Activated CD4-positive, alpha-beta T cell treated with anti-CD3 and anti-CD28 coated beads for 36 hours (primary cell): ENCODE measurements at regions of chr2 and their contacts with region 1.

Region 1: DNA sequence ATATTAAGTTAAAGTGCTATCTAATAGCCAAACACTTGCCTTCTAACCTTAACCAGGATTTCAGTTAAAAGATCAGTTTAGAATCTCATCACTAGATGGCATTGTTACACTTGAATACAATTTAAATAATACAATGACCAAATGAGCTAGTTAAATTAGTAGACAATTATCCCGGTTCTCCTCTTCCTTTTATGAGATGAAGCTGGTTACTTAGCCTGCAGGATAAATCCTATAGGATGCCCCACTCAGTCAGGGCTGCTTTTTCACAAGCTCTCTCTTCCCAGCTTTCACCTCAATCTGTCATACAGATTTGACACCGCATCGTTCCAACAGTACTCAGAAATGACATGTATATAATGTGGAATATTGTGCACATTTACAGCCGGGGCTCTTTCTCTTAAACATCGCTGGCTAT is 678.8 kb downstream of the KCNJ3 start:
- DNase-seq: no peak
- ATAC-seq: no peak
- H3K4me3 Mint-ChIP-seq: no peak overlapping the region
- H3K27ac Mint-ChIP-seq: no peak overlapping the region
- H3K4me1 Mint-ChIP-seq: peaks cover 13% of the 10 kb centered on the region
- H3K27me3 Mint-ChIP-seq: peaks cover 2% of the 10 kb centered on the region

Region 2: DNA sequence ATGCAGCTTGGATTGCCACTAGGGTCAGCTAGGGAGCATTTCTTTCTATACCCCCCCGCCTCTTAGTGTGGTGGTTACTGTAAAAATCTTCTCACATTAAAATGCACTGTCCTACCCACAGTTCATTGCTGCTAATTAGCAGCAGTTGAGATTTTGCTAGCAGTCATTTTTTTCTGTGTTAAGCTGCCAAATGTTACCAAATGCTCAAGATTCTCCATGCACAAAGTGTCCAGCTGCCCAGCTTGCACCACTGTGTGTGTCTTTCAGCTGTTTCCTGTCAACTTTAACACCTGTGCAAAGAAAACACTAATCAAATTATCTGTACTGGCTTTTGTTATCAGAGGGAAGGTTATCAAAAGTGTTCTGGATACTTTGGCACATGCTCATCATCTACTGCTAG is 275.9 kb after region 1 on chr2:
- CTCF ChIA-PET with region 1: no interaction called
- POLR2A ChIA-PET with region 1: no interaction called
- intact Hi-C with region 1: loop called in 1 of 2 experiments (anchors 10 kb)
- DNase-seq: no peak
- ATAC-seq: no peak
- H3K4me3 Mint-ChIP-seq: no peak overlapping the region
- H3K27ac Mint-ChIP-seq: no peak overlapping the region
- H3K4me1 Mint-ChIP-seq: no peaks in the 10 kb centered on the region
- H3K27me3 Mint-ChIP-seq: no peaks in the 10 kb centered on the region

Region 3: GRCh38 chr2:156400706-156401678 is 1023.7 kb after region 1 on chr2:
- CTCF ChIA-PET with region 1: no interaction called
- POLR2A ChIA-PET with region 1: no interaction called
- intact Hi-C with region 1: loop called in 1 of 2 experiments (anchors 10 kb)
- DNase-seq: peak; percentile 85
- ATAC-seq: peak; percentile 64
- H3K4me3 Mint-ChIP-seq: peak overlapping the region; percentile 85
- H3K27ac Mint-ChIP-seq: peak overlapping the region; percentile 95
- H3K4me1 Mint-ChIP-seq: peaks cover 43% of the 10 kb centered on the region
- H3K27me3 Mint-ChIP-seq: peaks cover 2% of the 10 kb centered on the region

Region 4: GRCh38 chr2:156892467-156893281 is 1515.4 kb after region 1 on chr2:
- CTCF ChIA-PET with region 1: no interaction called
- POLR2A ChIA-PET with region 1: no interaction called
- intact Hi-C with region 1: loop called (anchors 1 to 10 kb)
- DNase-seq: no peak
- ATAC-seq: peak; percentile 58
- H3K4me3 Mint-ChIP-seq: no peak overlapping the region
- H3K27ac Mint-ChIP-seq: no peak overlapping the region
- H3K4me1 Mint-ChIP-seq: peaks cover 10% of the 10 kb centered on the region
- H3K27me3 Mint-ChIP-seq: peaks cover 30% of the 10 kb centered on the region

Region 5: DNA sequence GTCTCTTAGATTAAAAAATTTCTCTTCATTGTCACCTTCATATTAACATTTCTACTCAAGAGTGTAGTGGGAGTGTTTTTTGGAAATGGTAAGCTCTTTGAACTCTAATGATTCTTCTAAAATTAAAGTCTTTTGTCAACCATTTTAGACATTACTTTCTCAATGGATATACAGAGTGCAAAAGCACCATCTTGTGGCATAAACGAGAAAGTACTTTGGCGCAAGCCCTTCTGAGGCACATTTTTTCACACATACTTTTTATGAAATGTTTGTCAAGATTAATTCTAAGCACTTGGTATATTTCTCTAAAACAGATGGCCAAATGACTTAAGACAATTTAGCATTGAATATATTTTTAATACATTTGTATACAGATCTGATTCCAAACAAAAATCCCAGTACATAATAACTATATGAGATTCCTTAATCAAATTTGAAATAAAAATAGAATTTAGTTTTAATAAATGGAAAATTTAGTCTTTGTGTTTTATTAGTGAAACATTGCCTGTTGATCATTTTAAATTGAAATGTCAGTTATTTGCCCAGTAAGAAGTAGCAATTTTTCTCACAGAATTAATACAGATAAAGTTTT is 1816.9 kb after region 1 on chr2:
- CTCF ChIA-PET with region 1: interaction called, 16 read pairs
- POLR2A ChIA-PET with region 1: no interaction called
- intact Hi-C with region 1: loop called (anchors 2 to 5 kb)
- DNase-seq: peak; percentile 21
- ATAC-seq: peak; percentile 63
- H3K4me3 Mint-ChIP-seq: no peak overlapping the region
- H3K27ac Mint-ChIP-seq: no peak overlapping the region
- H3K4me1 Mint-ChIP-seq: no peaks in the 10 kb centered on the region
- H3K27me3 Mint-ChIP-seq: peaks cover 2% of the 10 kb centered on the region